K562 (cell line): ENCODE measurements at regions of chr10 and their contacts with region 1.

Region 1: DNA sequence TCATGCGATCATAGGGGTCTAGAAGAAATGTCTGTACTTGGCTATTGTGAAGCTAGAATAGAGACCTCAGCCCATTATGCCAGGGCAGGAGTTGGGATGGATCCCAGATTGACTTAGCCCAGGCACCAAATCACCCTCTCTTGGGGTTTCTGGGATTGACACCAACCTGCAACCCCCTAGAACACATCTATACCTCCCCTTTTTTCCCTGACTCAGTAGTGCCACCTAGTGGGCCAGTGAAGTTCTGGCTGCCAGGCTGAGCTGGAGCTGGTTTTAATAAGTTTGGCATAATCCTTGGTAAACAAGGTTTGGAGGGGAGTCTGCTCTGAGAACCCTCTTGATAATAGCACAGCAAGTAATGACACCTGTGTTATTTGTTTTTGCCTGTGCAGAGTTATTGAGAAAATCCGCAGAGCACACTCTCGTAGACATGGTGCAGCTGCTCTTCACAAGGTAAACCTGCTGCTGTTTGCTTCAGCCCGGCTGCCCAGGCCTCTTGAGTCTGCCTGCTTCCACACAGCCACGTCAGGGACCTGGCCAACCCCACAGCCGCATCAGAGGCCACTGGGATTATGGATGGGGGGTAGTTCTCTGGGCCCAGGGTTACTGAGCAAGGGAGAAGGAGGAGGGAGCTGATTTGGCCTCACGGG is 43.3 kb upstream of the NFKB2 start:
- DNase-seq: peak; percentile 63 to 68 (median 65)
- ATAC-seq: peak; percentile 87
- H3K4me3 ChIP-seq: no peak overlapping the region
- H3K27ac ChIP-seq: no peak overlapping the region
- H3K4me1 ChIP-seq: no peaks in the 10 kb centered on the region
- H3K27me3 ChIP-seq: no peaks in the 10 kb centered on the region
- CTCF ChIP-seq: peak; percentile 72 to 84 (median 77)
- EP300 ChIP-seq: no peak
- POLR2A ChIP-seq: no peak
- RAD21 ChIP-seq: peak; percentile 38 to 68

Region 2: DNA sequence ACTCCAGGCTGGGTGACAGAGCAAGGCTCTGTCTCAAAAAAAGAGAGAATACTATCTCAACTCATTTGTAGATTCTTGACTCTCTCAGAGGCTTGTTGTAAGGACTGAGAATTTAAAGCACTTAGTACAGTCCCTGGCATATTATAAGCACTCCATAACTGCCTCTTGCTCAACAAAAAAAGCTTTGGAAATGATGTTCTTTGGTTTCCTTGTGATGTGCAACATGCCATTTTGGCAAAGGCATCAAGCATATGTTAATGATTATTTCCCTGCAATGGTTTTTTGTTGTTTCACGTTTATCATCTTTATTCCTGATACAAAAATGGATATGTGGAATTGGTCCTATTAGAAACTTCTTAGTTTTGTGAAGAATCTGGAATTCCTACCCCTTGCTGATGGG is 184.3 kb before region 1 on chr10:
- CTCF ChIA-PET with region 1: no interaction called
- POLR2A ChIA-PET with region 1: interaction called, 4 read pairs
- in situ Hi-C with region 1: no loop called
- intact Hi-C with region 1: loop called (anchors 5 kb)
- DNase-seq: no peak
- ATAC-seq: no peak
- H3K4me3 ChIP-seq: no peak overlapping the region
- H3K27ac ChIP-seq: no peak overlapping the region
- H3K4me1 ChIP-seq: peaks cover 6 to 10% of the 10 kb centered on the region in 2 experiments; a peak in 4 of 5 replicates
- H3K27me3 ChIP-seq: no peaks in the 10 kb centered on the region
- CTCF ChIP-seq: no peak
- EP300 ChIP-seq: no peak
- POLR2A ChIP-seq: no peak
- RAD21 ChIP-seq: no peak

Region 3: GRCh38 chr10:102231357-102232318 is 120.6 kb before region 1 on chr10:
- CTCF ChIA-PET with region 1: interaction called, 26 read pairs
- POLR2A ChIA-PET with region 1: interaction called, 4 read pairs
- in situ Hi-C with region 1: loop called (anchors 5 kb)
- intact Hi-C with region 1: loop called (anchors 1 kb)
- DNase-seq: peak; percentile 67 to 83 (median 73)
- ATAC-seq: peak; percentile 83
- H3K4me3 ChIP-seq: peak overlapping the region; percentile 43
- H3K27ac ChIP-seq: no peak overlapping the region
- H3K4me1 ChIP-seq: peaks cover 4 to 24% of the 10 kb centered on the region in 2 experiments; a peak in 4 of 5 replicates
- H3K27me3 ChIP-seq: peaks cover 0 to 5% of the 10 kb centered on the region in 2 experiments; a peak in 1 of 5 replicates
- CTCF ChIP-seq: peak; percentile 74 to 86 (median 79)
- EP300 ChIP-seq: no peak
- POLR2A ChIP-seq: no peak
- RAD21 ChIP-seq: peak; percentile 37 to 71

Region 4: GRCh38 chr10:102555781-102556328 is 203.7 kb after region 1 on chr10:
- CTCF ChIA-PET with region 1: no interaction called
- POLR2A ChIA-PET with region 1: no interaction called
- in situ Hi-C with region 1: no loop called
- intact Hi-C with region 1: no loop called
- DNase-seq: no peak
- ATAC-seq: no peak
- H3K4me3 ChIP-seq: no peak overlapping the region
- H3K27ac ChIP-seq: no peak overlapping the region
- H3K4me1 ChIP-seq: no peaks in the 10 kb centered on the region
- H3K27me3 ChIP-seq: no peaks in the 10 kb centered on the region
- CTCF ChIP-seq: no peak
- EP300 ChIP-seq: no peak
- POLR2A ChIP-seq: no peak
- RAD21 ChIP-seq: no peak